PC-3 (cell line): ENCODE measurements at regions of chr2 and their contacts with region 1.

Region 1: DNA sequence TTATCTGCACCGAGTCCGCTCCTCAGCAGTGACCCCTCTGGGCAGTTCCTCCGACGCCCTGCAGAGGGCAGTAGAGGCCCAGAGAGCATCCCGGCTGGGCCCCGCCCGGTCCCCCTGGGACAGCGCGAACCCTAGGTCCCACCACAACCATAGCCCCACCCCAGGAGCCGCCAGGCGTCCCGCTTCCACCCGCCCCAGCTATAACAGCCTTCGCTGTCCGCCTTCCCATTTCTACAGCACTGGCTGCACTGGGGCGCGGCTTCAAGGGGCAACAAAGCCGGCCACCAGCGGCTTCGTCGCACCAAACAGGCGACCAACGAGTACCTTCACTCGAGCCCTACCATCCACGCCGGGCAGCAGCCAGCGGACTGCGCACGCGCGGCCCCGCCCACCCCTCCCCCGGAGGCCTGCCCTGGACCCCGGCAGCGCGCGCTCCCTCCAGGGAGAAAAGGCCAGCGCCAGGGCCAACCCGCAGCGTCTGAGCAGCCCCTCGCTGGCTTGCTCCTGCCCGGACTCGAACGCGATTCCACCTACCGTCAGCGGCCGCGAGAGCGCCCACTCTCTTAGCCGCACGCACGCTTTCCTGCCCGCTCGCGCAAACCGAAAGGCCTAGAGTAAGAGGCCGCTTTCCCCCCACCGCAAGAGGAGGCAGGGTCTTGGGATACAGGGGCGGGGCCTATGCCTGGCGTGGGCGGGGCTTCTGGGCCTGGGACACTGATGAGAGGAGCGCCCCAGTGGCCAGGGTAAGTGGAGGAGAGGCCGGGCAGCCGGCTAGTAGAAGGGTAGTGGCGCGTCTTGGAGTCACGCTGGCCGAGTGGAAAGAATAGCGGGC is at the start of gene NHEJ1:
- DNase-seq: peak; percentile 92
- ATAC-seq: peak; percentile 91
- H3K4me3 ChIP-seq: peak within 1 kb of the TSS; percentile 79
- H3K27ac ChIP-seq: peak within 1 kb of the TSS; percentile 62
- H3K4me1 ChIP-seq: peaks cover 26% of the 10 kb centered on the region
- H3K27me3 ChIP-seq: no peaks in the 10 kb centered on the region
- CTCF ChIP-seq: peak; percentile 90
- total RNA-seq, gene NHEJ1: 16.7 and 18.5 TPM in 2 replicates

Region 2: DNA sequence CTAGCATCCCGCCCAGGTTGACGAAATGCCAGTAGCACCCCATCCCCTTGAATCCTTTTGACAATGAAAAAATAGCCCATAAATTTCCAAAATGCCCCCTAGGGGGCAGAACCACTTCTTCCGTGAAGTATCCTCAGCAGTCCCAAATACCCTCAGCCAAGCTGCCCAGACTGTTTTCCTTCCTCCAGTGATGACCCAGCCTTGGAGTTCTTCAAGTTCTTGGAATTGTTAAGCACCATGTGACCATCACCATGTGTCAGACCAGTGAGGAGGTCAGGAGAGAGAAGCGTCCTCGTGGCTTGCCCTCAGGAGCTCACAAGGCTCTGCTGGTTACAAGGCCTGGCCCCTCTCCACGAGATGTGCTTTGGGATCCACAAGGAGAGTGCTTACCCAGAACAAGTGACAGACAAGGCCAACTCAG is 10.8 kb after region 1 on chr2:
- CTCF ChIA-PET with region 1: no interaction called
- POLR2A ChIA-PET with region 1: no interaction called
- intact Hi-C with region 1: loop called (anchors 1 kb)
- DNase-seq: peak; percentile 75
- ATAC-seq: peak; percentile 61
- H3K4me3 ChIP-seq: no peak overlapping the region
- H3K27ac ChIP-seq: no peak overlapping the region
- H3K4me1 ChIP-seq: peaks cover 7% of the 10 kb centered on the region
- H3K27me3 ChIP-seq: no peaks in the 10 kb centered on the region
- CTCF ChIP-seq: peak; percentile 82

Region 3: GRCh38 chr2:219177552-219178376 is 17.4 kb after region 1 on chr2 and contains the start of gene RETREG2:
- CTCF ChIA-PET with region 1: no interaction called
- POLR2A ChIA-PET with region 1: no interaction called
- intact Hi-C with region 1: loop called (anchors 1 kb)
- DNase-seq: peak; percentile 87
- ATAC-seq: peak; percentile 70
- H3K4me3 ChIP-seq: peak within 1 kb of the TSS; percentile 83
- H3K27ac ChIP-seq: peak within 1 kb of the TSS; percentile 94
- H3K4me1 ChIP-seq: peaks cover 24% of the 10 kb centered on the region
- H3K27me3 ChIP-seq: no peaks in the 10 kb centered on the region
- CTCF ChIP-seq: no peak; the same call in 1 of the 2 replicates
- total RNA-seq, gene RETREG2: 61.0 and 87.2 TPM in 2 replicates